ENCODE measurements at regions of chr9 and their contacts with region 1.

Region 1: GRCh38 chr9:88593537-88594185 is 58.7 kb downstream of the NXNL2 start:
- DNase-seq: peak; percentile 79
- ATAC-seq: peak; percentile 76
- H3K4me3 Mint-ChIP-seq: no peak overlapping the region
- H3K27ac Mint-ChIP-seq: no peak overlapping the region
- H3K4me1 Mint-ChIP-seq: peaks cover 9% of the 10 kb centered on the region
- H3K27me3 Mint-ChIP-seq: peaks cover 21% of the 10 kb centered on the region

Region 2: DNA sequence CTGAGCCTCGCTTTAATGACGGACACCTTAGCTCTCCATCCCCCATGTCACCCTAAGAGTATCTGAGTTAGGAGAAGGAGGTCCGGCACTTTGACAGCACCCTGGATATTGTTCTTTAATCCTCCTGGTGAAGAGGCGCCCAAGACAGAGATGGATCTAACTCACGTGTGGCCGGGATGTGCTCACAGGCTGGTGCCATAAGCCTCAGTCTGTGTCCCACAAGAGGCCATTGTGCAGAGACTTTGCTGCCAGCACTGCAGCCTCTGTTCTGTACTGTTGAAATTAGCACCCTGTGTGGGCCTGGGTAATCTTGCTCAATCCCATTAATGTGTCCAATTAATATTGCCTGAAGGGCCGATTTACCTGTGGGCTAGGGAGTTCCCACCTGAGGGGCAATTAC is 21.0 kb before region 1 on chr9:
- CTCF ChIA-PET with region 1: no interaction called
- POLR2A ChIA-PET with region 1: no interaction called
- DNase-seq: no peak
- ATAC-seq: no peak
- H3K4me3 Mint-ChIP-seq: no peak overlapping the region
- H3K27ac Mint-ChIP-seq: no peak overlapping the region
- H3K4me1 Mint-ChIP-seq: no peaks in the 10 kb centered on the region
- H3K27me3 Mint-ChIP-seq: peaks cover 17% of the 10 kb centered on the region

Region 3: GRCh38 chr9:89000973-89001916 is 407.6 kb after region 1 on chr9:
- CTCF ChIA-PET with region 1: interaction called, 14 read pairs
- POLR2A ChIA-PET with region 1: no interaction called
- DNase-seq: peak; percentile 85
- ATAC-seq: peak; percentile 87
- H3K4me3 Mint-ChIP-seq: no peak overlapping the region
- H3K27ac Mint-ChIP-seq: no peak overlapping the region
- H3K4me1 Mint-ChIP-seq: peaks cover 3% of the 10 kb centered on the region
- H3K27me3 Mint-ChIP-seq: peaks cover 14% of the 10 kb centered on the region

Measured in activated CD8-positive, alpha-beta T cell treated with anti-CD3 and anti-CD28 coated beads, Interleukin-2, amount 10 ng/mL, durations not matched to agents 7 days and 5 days (primary cell).